ENCODE measurements at regions of chr1 and their contacts with region 1.

Region 1: GRCh38 chr1:111720274-111720976 is 18.8 kb downstream of the INKA2 start:
- DNase-seq: no peak
- ATAC-seq: peak in 1 of 3 donors; percentile 41
- H3K4me3 ChIP-seq: no peak overlapping the region
- H3K4me3 Mint-ChIP-seq: no peak overlapping the region
- H3K27ac ChIP-seq: no peak overlapping the region
- H3K27ac Mint-ChIP-seq: peak overlapping the region in 1 of 2 donors; percentile 37
- H3K4me1 ChIP-seq: no peaks in the 10 kb centered on the region
- H3K4me1 Mint-ChIP-seq: peaks cover 6 to 25% of the 10 kb centered on the region in 2 donors
- H3K27me3 ChIP-seq: no peaks in the 10 kb centered on the region
- H3K27me3 Mint-ChIP-seq: no peaks in the 10 kb centered on the region
- CTCF ChIP-seq: no peak

Region 2: DNA sequence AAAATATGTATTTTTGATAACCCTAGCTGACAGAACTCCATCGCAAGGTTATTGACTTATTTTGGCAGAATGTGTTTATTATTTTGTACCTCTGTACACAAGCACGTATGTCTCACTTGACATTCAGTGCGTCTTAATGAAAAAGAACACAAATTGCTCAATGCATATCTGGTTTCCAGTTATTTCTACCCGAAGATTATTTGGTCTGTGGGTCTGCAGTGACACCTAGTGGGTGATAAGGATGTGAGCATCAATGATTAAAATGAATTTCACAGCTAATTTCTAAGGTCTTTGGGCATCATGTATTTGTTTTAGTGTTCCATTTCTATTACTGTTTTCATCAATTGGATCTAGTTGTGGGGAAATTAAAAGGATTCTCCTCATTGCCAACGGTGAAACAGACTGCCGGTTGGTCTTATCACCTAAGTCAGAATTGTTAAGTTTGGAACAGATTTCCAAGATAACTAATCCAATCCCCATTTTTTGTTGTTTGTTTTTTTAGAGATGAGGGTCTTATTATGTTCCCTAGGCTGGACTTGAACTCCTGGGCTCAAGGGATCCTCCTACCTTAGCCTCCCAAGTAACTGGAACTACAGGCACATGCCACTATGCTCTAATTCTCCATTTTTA is 49.2 kb after region 1 on chr1:
- intact Hi-C with region 1: loop called (anchors 1 kb)
- DNase-seq: peak in 1 of 2 donors; percentile 86
- ATAC-seq: peak; percentile 73 to 78 (median 78)
- H3K4me3 ChIP-seq: no peak overlapping the region
- H3K4me3 Mint-ChIP-seq: no peak overlapping the region
- H3K27ac ChIP-seq: no peak overlapping the region
- H3K27ac Mint-ChIP-seq: no peak overlapping the region
- H3K4me1 ChIP-seq: no peaks in the 10 kb centered on the region
- H3K4me1 Mint-ChIP-seq: no peaks in the 10 kb centered on the region
- H3K27me3 ChIP-seq: no peaks in the 10 kb centered on the region
- H3K27me3 Mint-ChIP-seq: no peaks in the 10 kb centered on the region
- CTCF ChIP-seq: peak; percentile 89

Measured in natural killer cell (primary cell).